Activated B cell treated with CpG ODN at 0.5 μM for 24 hours (primary cell): ENCODE measurements at regions of chr6 and their contacts with region 1.

Region 1: DNA sequence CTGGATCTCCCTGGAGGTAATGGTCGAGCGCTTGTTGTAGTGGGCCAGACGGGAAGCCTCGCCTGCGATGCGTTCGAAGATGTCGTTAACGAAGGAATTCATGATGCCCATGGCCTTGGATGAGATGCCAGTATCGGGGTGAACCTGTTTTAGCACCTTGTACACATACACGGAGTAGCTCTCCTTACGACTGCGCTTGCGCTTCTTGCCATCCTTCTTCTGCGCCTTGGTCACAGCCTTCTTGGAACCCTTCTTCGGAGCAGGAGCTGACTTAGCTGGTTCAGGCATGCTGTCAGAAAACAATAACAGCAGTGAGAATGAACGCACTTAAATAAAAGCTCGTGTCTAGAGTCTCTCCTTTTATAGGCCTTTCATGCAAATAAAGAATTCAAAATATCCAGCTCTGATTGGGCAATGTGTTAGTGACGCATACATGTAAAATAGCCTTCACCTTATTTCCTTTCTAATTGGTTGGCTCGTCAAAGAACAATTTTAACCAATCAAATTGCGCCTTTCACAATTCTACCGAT is 129.2 kb downstream of the HFE start:
- DNase-seq: peak; percentile 62
- ATAC-seq: peak; percentile 78
- H3K4me3 Mint-ChIP-seq: no peak overlapping the region
- H3K27ac Mint-ChIP-seq: no peak overlapping the region
- H3K4me1 Mint-ChIP-seq: peaks cover 12% of the 10 kb centered on the region
- H3K27me3 Mint-ChIP-seq: no peaks in the 10 kb centered on the region
- CTCF ChIP-seq: no peak

Region 2: DNA sequence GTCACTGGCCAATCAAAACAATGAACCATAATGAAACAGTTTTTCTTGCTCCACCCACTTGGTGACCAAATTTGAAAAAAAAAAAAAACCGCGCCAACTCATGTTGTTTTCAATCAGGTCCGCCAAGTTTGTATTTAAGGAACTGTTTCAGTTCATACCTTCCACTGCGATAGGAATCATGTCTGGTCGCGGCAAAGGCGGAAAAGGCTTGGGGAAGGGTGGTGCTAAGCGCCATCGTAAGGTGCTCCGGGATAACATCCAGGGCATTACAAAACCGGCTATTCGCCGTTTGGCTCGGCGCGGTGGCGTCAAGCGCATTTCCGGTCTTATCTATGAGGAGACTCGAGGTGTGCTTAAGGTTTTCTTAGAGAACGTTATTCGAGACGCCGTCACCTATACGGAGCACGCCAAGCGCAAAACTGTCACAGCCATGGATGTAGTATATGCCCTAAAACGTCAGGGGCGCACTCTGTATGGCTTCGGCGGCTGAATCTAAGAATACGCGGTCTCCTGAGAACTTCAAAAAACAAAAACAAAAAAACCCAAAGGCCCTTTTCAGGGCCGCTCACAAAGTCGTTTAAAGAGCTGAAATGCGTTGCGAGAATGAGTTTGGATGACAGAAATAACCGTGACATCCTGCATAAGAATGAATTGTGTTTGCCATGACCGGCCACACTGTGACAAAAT is 112.5 kb before region 1 on chr6:
- CTCF ChIA-PET with region 1: no interaction called
- POLR2A ChIA-PET with region 1: interaction called, 28 read pairs
- intact Hi-C with region 1: no loop called
- DNase-seq: peak; percentile 83
- ATAC-seq: peak; percentile 85
- H3K4me3 Mint-ChIP-seq: peak overlapping the region; percentile 85
- H3K27ac Mint-ChIP-seq: peak overlapping the region; percentile 98
- H3K4me1 Mint-ChIP-seq: peaks cover 12% of the 10 kb centered on the region
- H3K27me3 Mint-ChIP-seq: peaks cover 3% of the 10 kb centered on the region
- CTCF ChIP-seq: no peak

Region 3: GRCh38 chr6:26234421-26235296 is 18.2 kb after region 1 on chr6:
- CTCF ChIA-PET with region 1: interaction called, 15 read pairs
- POLR2A ChIA-PET with region 1: interaction called, 401 read pairs
- intact Hi-C with region 1: loop called (anchors 1 kb)
- DNase-seq: peak; percentile 49
- ATAC-seq: peak; percentile 77
- H3K4me3 Mint-ChIP-seq: peak overlapping the region; percentile 89
- H3K27ac Mint-ChIP-seq: peak overlapping the region; percentile 97
- H3K4me1 Mint-ChIP-seq: peaks cover 26% of the 10 kb centered on the region
- H3K27me3 Mint-ChIP-seq: no peaks in the 10 kb centered on the region
- CTCF ChIP-seq: no peak

Region 4: GRCh38 chr6:26322645-26323482 is 106.4 kb after region 1 on chr6:
- CTCF ChIA-PET with region 1: no interaction called
- POLR2A ChIA-PET with region 1: interaction called, 16 read pairs
- intact Hi-C with region 1: no loop called
- DNase-seq: no peak
- ATAC-seq: peak; percentile 56
- H3K4me3 Mint-ChIP-seq: peak overlapping the region; percentile 89
- H3K27ac Mint-ChIP-seq: peak overlapping the region; percentile 85
- H3K4me1 Mint-ChIP-seq: peaks cover 25% of the 10 kb centered on the region
- H3K27me3 Mint-ChIP-seq: peaks cover 14% of the 10 kb centered on the region
- CTCF ChIP-seq: no peak

Region 5: DNA sequence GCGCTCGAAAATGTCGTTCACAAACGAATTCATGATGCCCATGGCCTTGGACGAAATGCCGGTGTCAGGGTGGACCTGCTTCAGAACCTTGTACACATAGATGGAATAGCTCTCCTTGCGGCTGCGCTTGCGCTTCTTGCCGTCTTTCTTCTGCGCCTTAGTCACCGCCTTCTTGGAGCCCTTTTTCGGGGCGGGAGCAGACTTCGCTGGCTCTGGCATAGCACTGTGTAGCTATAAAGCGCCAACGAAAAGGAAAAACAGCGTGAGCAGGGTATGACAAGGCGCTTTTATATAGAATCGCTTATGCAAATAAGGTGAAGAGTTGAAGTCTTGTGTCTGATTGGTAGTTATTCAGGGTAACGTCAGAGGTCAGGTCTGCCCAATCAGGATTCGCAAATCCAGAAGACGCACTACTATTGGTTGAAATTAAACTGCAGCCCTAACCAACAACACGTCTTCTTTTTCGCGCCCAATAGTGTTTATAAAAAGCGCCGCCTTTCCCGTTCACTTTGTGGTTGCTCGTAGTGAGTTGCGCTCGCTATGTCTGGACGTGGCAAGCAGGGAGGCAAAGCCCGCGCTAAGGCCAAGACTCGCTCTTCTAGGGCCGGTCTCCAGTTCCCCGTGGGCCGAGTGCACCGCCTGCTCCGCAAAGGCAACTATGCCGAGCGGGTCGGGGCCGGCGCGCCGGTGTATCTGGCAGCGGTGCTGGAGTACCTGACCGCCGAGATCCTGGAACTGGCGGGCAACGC is 916.3 kb after region 1 on chr6:
- CTCF ChIA-PET with region 1: no interaction called
- POLR2A ChIA-PET with region 1: interaction called, 20 read pairs
- intact Hi-C with region 1: no loop called
- DNase-seq: peak; percentile 77
- ATAC-seq: peak; percentile 84
- H3K4me3 Mint-ChIP-seq: no peak overlapping the region
- H3K27ac Mint-ChIP-seq: no peak overlapping the region
- H3K4me1 Mint-ChIP-seq: peaks cover 14% of the 10 kb centered on the region
- H3K27me3 Mint-ChIP-seq: no peaks in the 10 kb centered on the region
- CTCF ChIP-seq: no peak

Region 6: DNA sequence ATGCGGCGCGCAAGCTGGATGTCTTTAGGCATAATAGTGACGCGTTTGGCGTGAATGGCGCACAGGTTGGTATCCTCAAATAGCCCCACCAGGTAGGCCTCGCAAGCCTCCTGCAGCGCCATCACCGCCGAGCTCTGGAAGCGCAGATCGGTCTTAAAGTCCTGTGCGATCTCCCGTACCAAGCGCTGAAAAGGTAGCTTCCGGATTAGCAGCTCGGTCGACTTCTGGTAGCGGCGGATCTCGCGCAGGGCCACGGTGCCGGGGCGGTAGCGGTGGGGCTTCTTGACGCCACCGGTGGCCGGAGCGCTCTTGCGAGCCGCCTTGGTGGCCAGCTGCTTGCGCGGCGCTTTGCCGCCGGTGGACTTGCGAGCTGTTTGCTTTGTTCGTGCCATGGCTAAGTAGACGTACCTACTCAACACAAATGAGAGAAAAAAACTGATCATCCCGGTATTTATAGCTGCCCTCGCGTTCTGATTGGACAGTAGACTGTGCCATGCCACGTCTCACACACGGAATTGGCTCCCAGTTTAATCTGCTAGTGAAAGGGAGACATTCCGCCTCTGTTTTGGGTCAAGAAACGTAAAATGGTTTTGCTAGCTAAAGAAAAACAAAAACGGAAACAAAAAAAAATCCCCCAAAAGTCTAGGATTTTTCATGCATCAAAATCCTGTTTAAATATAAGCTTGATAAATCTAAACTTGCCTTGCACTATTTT is 1655.7 kb after region 1 on chr6:
- CTCF ChIA-PET with region 1: no interaction called
- POLR2A ChIA-PET with region 1: interaction called, 24 read pairs
- intact Hi-C with region 1: no loop called
- DNase-seq: peak; percentile 73
- ATAC-seq: peak; percentile 80
- H3K4me3 Mint-ChIP-seq: peak overlapping the region; percentile 94
- H3K27ac Mint-ChIP-seq: peak overlapping the region; percentile 95
- H3K4me1 Mint-ChIP-seq: peaks cover 36% of the 10 kb centered on the region
- H3K27me3 Mint-ChIP-seq: no peaks in the 10 kb centered on the region
- CTCF ChIP-seq: no peak